ENCODE measurements at regions of chr4 and their contacts with region 1.

Region 1: DNA sequence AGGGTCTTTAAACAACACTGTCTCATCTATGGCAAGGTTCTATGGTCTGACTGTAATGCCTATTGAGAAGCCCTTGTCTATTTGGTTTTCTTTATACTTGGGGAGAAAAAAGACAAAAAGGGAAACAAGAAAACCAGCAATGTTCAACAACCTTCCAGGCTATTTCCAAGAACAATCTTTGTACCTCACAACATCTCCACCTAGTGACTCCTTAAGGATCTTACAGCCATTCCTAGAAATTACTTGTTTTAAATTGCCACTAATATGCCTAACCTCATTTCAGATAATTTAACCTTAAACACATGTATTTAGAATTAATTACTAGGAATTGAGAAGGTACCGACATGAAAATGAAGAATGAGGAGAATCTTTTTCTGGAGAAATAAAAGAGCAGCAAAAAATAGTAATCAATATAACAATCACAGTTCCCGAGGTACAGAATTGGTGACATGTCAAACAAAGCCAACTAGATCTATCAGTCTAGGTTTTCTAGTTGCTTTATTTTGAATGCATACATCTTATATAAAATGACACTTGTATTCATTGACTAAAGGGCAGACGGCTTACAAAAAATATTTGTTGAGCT is 1.6 kb upstream of the RBM46 start:
- DNase-seq: no peak
- H3K4me3 Mint-ChIP-seq: no peak overlapping the region
- H3K27ac Mint-ChIP-seq: no peak overlapping the region
- H3K4me1 Mint-ChIP-seq: no peaks in the 10 kb centered on the region
- H3K27me3 Mint-ChIP-seq: peaks cover 16% of the 10 kb centered on the region

Region 2: DNA sequence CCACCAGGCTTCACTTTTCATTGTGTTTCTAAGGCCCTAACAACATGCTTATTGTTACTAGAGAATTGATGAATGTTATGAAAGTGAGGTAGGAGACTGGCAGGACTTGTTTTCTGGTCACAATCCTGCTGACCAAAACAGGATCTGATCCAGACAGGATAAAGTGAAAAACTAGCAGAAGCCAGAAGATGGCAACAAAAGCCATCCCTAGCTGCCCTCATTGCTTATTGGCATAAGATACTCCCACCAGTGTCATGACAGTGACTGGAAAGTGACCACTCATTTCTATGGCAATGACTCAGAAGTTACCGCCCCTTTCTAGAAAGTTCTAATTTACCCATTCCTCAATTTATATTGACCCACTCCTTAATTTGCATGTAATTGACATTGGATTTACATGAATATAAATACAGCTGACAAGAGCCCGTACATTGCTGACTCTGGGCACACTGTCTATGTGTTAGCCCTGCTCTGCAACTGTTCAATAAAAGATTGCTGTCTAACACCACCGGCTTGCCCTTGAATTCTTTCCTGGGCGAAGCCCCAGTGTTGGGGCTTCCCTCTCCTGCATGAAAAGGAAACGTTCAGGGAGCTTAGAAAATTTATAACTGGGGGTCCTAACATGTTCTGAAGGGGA is 137.0 kb before region 1 on chr4:
- CTCF ChIA-PET with region 1: no interaction called
- POLR2A ChIA-PET with region 1: no interaction called
- intact Hi-C with region 1: loop called (anchors 5 kb)
- DNase-seq: no peak
- H3K4me3 Mint-ChIP-seq: no peak overlapping the region
- H3K27ac Mint-ChIP-seq: no peak overlapping the region
- H3K4me1 Mint-ChIP-seq: no peaks in the 10 kb centered on the region
- H3K27me3 Mint-ChIP-seq: peaks cover 7% of the 10 kb centered on the region